ENCODE measurements at regions of chr20 and their contacts with region 1.

Region 1: DNA sequence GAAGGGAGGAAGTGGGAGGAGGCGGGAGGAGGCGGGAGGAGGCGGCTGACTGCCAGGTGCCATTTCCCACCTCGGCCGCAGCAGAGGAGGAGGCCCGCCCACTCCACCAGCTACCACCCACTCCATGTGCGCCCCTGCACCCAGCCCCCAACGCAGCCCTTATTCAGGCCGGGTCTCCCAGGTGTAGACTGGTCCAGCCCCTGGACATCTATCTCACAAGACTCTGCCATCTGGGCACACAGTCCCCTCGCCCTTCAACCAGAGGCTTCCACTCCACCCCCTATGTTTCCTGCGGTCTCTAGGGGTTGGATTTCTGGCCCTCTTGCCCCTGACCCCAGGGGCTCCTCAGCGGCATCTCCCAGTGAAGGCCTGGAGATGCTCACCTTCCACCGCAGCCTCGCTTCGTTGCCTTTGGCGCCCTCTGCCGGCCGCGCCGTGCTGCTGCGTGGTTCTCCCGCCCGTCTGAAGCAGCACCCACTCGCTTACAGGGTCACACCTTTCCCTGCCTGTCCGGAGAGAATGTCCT is 32.6 kb upstream of the FAM83D start:
- DNase-seq: peak; percentile 57 to 73 (median 67)
- H3K4me3 ChIP-seq: no peak overlapping the region
- H3K27ac ChIP-seq: no peak overlapping the region
- H3K4me1 ChIP-seq: peaks cover 0 to 9% (median 2%) of the 10 kb centered on the region in 4 experiments
- H3K27me3 ChIP-seq: no peaks in the 10 kb centered on the region

Region 2: GRCh38 chr20:38833857-38834164 is 59.8 kb before region 1 on chr20:
- CTCF ChIA-PET with region 1: interaction called, 16 read pairs
- POLR2A ChIA-PET with region 1: no interaction called
- DNase-seq: no peak
- H3K4me3 ChIP-seq: no peak overlapping the region
- H3K27ac ChIP-seq: no peak overlapping the region
- H3K4me1 ChIP-seq: peaks cover 0 to 4% (median 1%) of the 10 kb centered on the region in 4 experiments
- H3K27me3 ChIP-seq: no peaks in the 10 kb centered on the region

Region 3: DNA sequence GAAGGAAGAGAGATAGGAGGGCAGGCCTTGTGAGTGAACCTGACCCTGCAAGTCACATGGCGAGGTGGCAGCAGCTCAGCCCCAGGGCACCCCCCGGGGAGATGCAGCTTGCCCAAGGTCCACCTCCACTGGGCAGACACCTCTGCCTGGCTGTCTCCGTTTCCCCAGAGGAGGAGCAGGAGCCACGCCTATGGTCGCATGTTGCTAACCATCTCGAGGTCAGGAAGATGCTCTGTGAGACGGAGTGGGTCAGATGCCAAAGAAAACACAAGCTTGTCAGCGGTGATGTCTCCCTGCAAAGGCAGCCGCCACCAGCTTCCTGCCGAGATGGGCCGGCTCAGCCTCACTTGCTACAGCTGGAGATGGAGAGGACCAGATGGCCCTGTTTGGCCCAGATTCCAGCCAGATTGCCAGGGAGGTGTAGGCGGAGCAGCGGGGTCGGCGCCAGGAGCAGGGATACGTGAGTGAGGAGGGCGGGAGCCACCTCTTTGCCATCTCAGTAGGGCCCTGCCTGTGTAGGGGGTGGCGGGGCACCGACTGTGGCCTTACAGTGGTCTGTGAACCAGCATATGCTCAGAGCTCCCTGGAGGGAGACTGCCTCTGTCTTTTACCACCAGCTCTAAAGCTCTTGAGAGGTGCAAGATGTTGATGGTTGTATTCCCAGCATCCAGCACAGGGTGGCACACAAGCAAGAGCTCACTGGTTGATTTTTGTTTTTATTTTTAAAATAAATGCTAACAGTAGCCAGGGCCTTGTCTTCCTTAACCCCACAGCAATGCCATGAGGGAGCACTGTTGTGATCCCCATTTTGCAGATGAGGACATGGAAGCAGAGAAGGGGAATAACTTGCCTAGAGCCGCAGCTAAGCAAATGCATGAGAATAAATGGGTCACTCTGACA is 10.3 kb before region 1 on chr20:
- CTCF ChIA-PET with region 1: interaction called, 16 read pairs
- POLR2A ChIA-PET with region 1: no interaction called
- DNase-seq: no peak
- H3K4me3 ChIP-seq: no peak overlapping the region
- H3K27ac ChIP-seq: no peak overlapping the region
- H3K4me1 ChIP-seq: peaks cover 1 to 11% (median 4%) of the 10 kb centered on the region in 4 experiments
- H3K27me3 ChIP-seq: no peaks in the 10 kb centered on the region

Measured in common myeloid progenitor, CD34-positive (primary cell).